ENCODE measurements at regions of chr1 and their contacts with region 1.

Region 1: DNA sequence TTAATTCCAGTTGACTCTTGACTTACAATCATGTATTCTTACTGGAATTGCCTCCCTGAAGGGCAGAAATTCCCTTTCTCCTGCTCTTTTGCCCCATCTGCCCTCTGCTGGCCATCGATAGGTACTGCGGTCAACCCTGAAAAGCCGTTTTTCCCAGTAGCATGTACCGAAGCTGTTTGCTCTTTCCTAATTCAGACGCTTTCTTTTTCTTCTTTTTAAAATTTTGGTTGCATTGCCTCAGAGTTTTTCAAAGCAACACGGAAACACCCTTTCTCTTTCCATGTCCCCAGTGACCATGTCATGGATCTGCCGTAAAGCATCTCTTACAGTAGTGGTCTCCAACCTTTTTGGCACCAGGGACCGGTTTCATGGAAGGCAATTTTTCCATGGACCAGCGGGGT is 164.2 kb upstream of the C1orf21 start:
- DNase-seq: peak; percentile 37 to 72 (median 71)
- ATAC-seq: peak; percentile 58 to 60
- H3K4me3 ChIP-seq: peak overlapping the region; percentile 11
- H3K27ac ChIP-seq: no peak overlapping the region
- H3K4me1 ChIP-seq: no peaks in the 10 kb centered on the region
- H3K27me3 ChIP-seq: no peaks in the 10 kb centered on the region

Region 2: DNA sequence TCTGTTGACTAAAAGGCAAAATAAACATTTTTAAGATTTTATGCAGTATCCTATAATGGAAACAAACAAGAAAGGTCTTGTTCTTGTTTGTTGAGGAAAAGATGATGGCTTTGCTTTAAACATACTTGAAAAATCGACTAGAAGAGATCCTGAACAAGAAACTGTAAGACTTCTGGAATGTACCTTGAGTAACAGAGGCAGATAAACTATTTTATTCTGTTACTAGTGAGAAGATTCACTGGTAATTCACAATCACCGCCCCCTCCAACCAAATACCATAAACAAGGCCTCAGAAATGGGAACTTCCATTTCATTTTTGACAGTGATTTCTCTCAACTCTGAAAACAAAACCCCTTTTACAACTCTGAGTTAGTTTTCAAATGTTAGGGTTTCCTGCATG is 153.0 kb before region 1 on chr1:
- intact Hi-C with region 1: loop called in 2 of 4 experiments (anchors 2 to 5 kb)
- DNase-seq: no peak
- ATAC-seq: no peak
- H3K4me3 ChIP-seq: no peak overlapping the region
- H3K27ac ChIP-seq: no peak overlapping the region
- H3K4me1 ChIP-seq: no peaks in the 10 kb centered on the region
- H3K27me3 ChIP-seq: no peaks in the 10 kb centered on the region

Region 3: GRCh38 chr1:184075055-184076029 is 147.3 kb before region 1 on chr1:
- intact Hi-C with region 1: loop called (anchors 2 to 5 kb)
- DNase-seq: no peak
- ATAC-seq: peak; percentile 81 to 84
- H3K4me3 ChIP-seq: no peak overlapping the region
- H3K27ac ChIP-seq: no peak overlapping the region
- H3K4me1 ChIP-seq: no peaks in the 10 kb centered on the region
- H3K27me3 ChIP-seq: no peaks in the 10 kb centered on the region

Region 4: DNA sequence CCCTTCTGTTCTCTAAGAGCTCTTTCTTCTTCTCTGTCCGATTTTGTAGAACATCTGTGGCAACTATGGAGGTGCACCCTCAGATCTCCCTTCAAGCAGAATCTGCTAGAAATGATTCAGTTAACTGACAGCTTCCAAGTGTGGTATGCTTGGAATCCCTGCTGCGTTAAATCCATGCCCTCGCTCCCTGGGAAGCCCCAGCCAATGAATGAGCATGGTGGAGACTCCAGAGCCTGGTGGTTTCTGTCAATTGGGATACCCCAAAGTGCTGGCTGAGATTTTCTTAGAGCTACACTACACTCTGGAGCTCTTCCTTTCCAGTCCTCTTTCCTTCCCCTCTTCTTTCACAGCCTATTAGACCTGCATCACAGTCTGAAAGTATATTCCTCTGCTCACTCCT is 47.9 kb after region 1 on chr1:
- intact Hi-C with region 1: no loop called
- DNase-seq: no peak
- ATAC-seq: peak in 1 of 2 donors; percentile 22
- H3K4me3 ChIP-seq: no peak overlapping the region
- H3K27ac ChIP-seq: no peak overlapping the region
- H3K4me1 ChIP-seq: no peaks in the 10 kb centered on the region
- H3K27me3 ChIP-seq: no peaks in the 10 kb centered on the region

Region 5: DNA sequence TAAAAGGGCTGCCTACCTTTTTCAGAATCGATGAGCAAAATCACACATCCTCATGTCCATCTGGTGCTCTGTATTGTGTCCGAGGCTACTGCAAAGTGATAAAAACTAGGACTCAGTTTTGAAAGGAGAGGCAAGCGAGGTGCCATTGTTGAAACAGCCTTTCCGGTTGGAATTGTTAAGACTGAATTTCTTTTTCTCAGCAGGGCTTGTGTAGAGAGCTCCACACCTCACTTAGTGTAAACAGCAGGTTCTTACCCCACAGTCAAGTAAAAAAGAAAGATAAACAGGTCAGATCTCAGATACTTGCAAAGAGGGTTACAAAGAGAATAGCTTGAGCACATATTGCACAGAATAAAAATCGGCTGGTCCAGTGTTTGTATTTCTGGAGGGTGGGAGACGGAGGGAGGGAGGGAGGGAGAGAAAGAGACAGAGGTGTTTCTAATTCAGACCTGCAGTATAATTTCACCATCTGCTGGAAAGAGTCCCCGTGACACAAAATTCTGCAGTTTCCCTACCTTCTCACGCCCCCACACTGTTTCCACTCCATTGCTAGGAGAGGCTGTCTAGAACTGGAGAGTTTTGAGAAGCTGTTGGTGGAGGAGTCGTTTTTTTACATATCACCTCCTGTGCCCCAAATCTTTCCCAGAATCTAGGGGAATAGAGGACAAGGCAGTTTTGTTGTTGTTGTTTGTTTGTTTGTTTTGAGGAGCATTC is 449.5 kb after region 1 on chr1:
- intact Hi-C with region 1: loop called in 1 of 4 experiments (anchors 10 kb)
- DNase-seq: no peak
- ATAC-seq: no peak
- H3K4me3 ChIP-seq: no peak overlapping the region
- H3K27ac ChIP-seq: no peak overlapping the region
- H3K4me1 ChIP-seq: no peaks in the 10 kb centered on the region
- H3K27me3 ChIP-seq: no peaks in the 10 kb centered on the region

Measured in right cardiac atrium (tissue), 5 donors.